ENCODE measurements at regions of chr7 and their contacts with region 1.

Region 1: GRCh38 chr7:151368136-151368571 is 26.5 kb downstream of the NUB1 start:
- DNase-seq: peak; percentile 57 to 87
- H3K4me3 ChIP-seq: no peak overlapping the region
- H3K27ac ChIP-seq: no peak overlapping the region
- H3K4me1 ChIP-seq: peaks cover 4% of the 10 kb centered on the region
- H3K27me3 ChIP-seq: no peaks in the 10 kb centered on the region
- CTCF ChIP-seq: peak; percentile 93

Region 2: DNA sequence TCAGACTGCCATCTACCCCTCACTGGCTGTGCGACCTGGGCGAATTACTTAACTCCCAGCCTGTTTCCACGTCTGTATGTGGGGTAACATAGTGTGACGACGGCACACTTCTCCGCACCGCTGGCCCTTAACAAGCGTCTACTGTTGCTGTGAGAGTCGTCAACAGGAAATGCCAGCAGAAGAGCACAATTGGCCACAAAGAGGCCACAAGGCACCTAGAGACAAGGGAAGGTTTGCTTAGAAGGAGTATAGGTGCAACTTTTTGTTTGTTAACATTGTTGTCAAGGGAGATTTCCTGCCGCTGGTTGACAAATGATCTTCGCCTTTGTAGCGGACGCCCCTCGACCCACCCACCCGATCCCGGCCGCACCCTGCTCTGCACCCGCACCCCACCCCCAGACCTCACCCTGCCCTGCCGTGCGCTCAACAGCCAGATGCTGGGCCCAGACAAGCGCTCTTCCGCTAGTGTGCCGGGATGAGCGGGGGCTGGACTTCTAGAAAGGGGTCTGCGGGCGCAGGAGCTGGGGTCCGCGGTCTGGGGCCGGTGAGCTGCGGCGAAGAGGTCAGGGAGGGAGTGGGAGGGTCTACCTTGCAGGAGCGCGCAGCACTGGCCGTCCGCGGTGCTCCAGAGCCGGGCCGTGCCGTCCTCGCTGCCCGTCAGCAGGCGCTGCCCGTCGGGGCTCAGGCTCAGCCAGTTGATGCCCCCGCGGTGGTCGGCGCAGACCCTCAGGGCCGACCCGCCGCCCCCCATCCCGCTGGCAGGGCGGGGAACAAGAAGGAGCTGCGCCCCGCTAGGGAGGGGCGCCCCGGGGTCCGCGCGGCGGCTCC is 40.9 kb after region 1 on chr7:
- CTCF ChIA-PET with region 1: no interaction called
- POLR2A ChIA-PET with region 1: no interaction called
- intact Hi-C with region 1: loop called (anchors 2 kb)
- DNase-seq: peak in 1 of 2 experiments; percentile 68
- H3K4me3 ChIP-seq: no peak overlapping the region
- H3K27ac ChIP-seq: no peak overlapping the region
- H3K4me1 ChIP-seq: peaks cover 9% of the 10 kb centered on the region
- H3K27me3 ChIP-seq: peaks cover 9% of the 10 kb centered on the region; the same call in 1 of the 2 replicates
- CTCF ChIP-seq: no peak

Region 3: GRCh38 chr7:151429548-151430331 is 61.6 kb after region 1 on chr7:
- CTCF ChIA-PET with region 1: no interaction called
- POLR2A ChIA-PET with region 1: no interaction called
- intact Hi-C with region 1: loop called (anchors 1 kb)
- DNase-seq: peak; percentile 52 to 55
- H3K4me3 ChIP-seq: no peak overlapping the region
- H3K27ac ChIP-seq: peak overlapping the region; percentile 55
- H3K4me1 ChIP-seq: peaks cover 44% of the 10 kb centered on the region
- H3K27me3 ChIP-seq: no peaks in the 10 kb centered on the region
- CTCF ChIP-seq: no peak

Region 4: GRCh38 chr7:151448261-151449252 is 80.4 kb after region 1 on chr7:
- CTCF ChIA-PET with region 1: interaction called, 16 read pairs
- POLR2A ChIA-PET with region 1: no interaction called
- intact Hi-C with region 1: loop called (anchors 1 kb)
- DNase-seq: peak; percentile 43 to 77
- H3K4me3 ChIP-seq: peak overlapping the region; percentile 53
- H3K27ac ChIP-seq: no peak overlapping the region
- H3K4me1 ChIP-seq: no peaks in the 10 kb centered on the region
- H3K27me3 ChIP-seq: no peaks in the 10 kb centered on the region
- CTCF ChIP-seq: peak; percentile 83

Region 5: DNA sequence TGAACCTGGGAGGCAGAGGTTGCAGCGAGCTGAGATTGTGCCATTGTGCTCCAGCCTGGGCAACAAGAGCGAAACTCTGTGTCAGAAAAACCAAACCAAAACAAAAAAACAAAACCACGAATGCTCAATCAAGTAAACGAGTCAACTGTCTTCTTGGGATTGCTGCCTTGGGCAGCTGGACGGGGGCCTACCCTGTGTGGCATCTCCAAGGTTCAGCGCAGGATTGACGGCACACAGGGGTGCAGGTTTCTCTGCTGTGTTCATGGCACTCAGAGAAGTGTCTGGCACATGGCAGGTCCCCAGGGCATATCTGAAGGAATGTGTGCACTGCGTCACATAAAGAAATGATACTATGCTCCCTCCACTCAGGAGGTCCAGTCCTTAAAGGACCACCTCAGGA is 97.0 kb after region 1 on chr7:
- CTCF ChIA-PET with region 1: no interaction called
- POLR2A ChIA-PET with region 1: no interaction called
- intact Hi-C with region 1: no loop called
- DNase-seq: no peak
- H3K4me3 ChIP-seq: no peak overlapping the region
- H3K27ac ChIP-seq: no peak overlapping the region
- H3K4me1 ChIP-seq: peaks cover 17% of the 10 kb centered on the region
- H3K27me3 ChIP-seq: no peaks in the 10 kb centered on the region
- CTCF ChIP-seq: no peak

Region 6: DNA sequence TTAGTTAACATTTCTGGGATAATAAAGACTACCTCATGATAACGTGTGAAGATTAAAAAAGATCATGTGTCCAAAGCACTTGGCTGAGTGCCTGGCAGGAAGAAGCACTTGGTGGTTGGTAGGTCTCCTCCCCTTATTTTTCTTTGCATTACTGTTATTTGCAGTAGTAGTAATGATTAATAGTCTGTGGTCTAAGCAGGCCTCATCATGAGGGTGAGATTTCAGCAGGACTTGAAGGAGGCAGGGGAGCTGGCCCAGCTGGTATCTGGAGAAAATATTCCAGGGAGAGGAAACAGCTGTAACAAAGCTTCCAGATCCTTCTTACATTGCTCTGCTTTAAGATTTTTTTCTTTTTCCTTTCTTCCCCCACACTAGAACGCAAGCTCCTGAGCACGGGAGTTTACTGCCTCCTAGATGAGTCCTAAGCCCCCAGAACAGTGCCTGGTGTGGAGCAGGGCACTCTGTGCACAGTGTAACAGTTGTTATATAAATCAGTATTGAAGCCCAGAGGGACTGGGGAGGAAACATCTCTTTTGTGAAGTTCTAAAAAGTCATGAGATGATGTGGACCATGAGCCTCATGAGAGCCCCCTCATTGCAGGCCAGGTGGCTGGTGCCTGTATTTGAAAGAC is 182.6 kb after region 1 on chr7:
- CTCF ChIA-PET with region 1: no interaction called
- POLR2A ChIA-PET with region 1: no interaction called
- intact Hi-C with region 1: loop called (anchors 5 kb)
- DNase-seq: peak in 1 of 2 experiments; percentile 12
- H3K4me3 ChIP-seq: no peak overlapping the region
- H3K27ac ChIP-seq: no peak overlapping the region
- H3K4me1 ChIP-seq: peaks cover 32% of the 10 kb centered on the region
- H3K27me3 ChIP-seq: no peaks in the 10 kb centered on the region
- CTCF ChIP-seq: no peak

Region 7: GRCh38 chr7:151759591-151760042 is 391.5 kb after region 1 on chr7:
- CTCF ChIA-PET with region 1: no interaction called
- POLR2A ChIA-PET with region 1: no interaction called
- intact Hi-C with region 1: loop called (anchors 1 kb)
- DNase-seq: peak; percentile 60 to 75
- H3K4me3 ChIP-seq: no peak overlapping the region
- H3K27ac ChIP-seq: no peak overlapping the region
- H3K4me1 ChIP-seq: peaks cover 15% of the 10 kb centered on the region
- H3K27me3 ChIP-seq: no peaks in the 10 kb centered on the region
- CTCF ChIP-seq: peak; percentile 99

Region 8: GRCh38 chr7:151770675-151771074 is 402.5 kb after region 1 on chr7:
- CTCF ChIA-PET with region 1: no interaction called
- POLR2A ChIA-PET with region 1: no interaction called
- intact Hi-C with region 1: no loop called
- DNase-seq: no peak
- H3K4me3 ChIP-seq: no peak overlapping the region
- H3K27ac ChIP-seq: no peak overlapping the region
- H3K4me1 ChIP-seq: no peaks in the 10 kb centered on the region
- H3K27me3 ChIP-seq: peaks cover 42% of the 10 kb centered on the region
- CTCF ChIP-seq: no peak

Region 9: DNA sequence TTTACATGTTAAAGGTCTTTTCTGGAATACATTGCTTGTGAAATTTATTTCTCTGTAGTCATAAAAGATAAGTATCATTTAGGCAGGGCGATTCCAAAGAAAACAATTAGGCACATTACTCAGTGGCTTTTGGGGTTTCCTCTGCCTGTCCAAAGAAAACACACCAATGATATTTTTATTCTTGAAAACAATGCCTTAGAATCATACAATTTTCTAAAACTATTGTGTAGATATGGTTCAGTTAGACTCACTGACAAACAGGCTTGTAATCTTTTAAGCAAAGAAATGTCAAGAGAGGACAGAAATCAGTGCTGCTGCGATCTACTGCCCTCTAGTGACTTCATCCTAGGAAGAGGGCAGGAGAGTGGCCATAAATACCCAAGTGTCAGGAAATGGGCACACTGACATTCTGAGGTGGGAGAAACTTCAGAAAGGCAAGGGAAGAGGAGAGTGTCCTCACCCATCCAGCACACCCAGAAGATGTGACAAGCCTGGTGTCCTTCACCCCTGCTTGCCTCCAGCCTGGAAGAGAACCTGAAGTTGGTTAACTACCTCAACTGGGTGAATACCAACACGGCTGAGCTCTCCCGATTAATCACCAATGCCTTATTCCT is 777.8 kb after region 1 on chr7:
- CTCF ChIA-PET with region 1: no interaction called
- POLR2A ChIA-PET with region 1: no interaction called
- intact Hi-C with region 1: loop called (anchors 1 kb)
- DNase-seq: peak; percentile 41 to 50
- H3K4me3 ChIP-seq: no peak overlapping the region
- H3K27ac ChIP-seq: no peak overlapping the region
- H3K4me1 ChIP-seq: no peaks in the 10 kb centered on the region
- H3K27me3 ChIP-seq: no peaks in the 10 kb centered on the region
- CTCF ChIP-seq: peak; percentile 77